MCF 10A (cell line): ENCODE measurements at regions of chr7 and their contacts with region 1.

Region 1: GRCh38 chr7:47669061-47669891 is 87.4 kb upstream of the TNS3 start:
- DNase-seq: peak; percentile 95
- H3K4me3 Mint-ChIP-seq: no peak overlapping the region
- H3K27ac Mint-ChIP-seq: peak overlapping the region; percentile 93
- H3K4me1 Mint-ChIP-seq: peaks cover 29% of the 10 kb centered on the region
- H3K27me3 Mint-ChIP-seq: no peaks in the 10 kb centered on the region
- CTCF ChIP-seq: no peak

Region 2: DNA sequence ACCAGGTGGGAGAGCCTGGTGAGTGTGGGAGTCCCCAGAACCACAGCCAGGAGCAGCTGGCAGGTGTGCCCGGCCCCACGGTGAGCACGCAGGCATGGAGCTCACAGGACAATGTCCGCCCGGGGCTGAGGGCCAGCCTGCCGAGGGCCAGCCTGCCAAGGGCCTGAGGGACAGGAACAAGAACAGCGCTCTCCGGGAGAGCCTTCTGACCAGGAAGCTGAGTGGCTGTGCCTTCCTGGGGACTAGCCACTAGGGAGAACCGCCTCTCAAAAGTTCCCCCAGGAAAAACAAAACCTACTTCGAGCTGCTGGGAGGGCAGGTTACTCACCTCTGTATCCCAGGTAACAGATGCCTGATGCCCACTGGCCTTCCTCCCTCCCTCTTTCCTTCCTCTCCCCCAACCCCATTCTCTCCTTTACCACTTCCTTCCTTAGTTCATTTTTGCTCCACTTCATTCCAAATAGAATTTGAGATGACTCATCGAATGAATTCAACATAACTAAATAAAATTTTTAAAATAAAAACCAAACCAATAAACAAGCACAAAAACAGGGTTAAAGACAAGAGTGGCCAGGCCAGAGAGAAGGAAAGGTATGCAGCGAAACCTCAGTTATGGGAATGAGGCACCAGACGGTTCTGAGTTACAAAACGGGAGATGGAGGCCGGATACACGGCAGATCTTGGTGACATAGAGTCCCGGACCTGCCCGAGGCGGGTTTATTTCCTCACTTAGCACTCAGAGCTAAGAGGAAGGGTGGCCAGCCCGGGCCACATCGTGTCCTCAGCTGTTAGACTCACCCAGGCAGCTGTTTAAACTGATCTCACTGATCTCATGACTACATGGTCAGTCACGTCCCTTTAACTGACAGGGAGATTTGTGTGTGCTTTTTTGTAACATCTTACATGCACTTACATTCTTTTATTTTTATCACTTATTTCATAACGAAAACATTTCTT is 215.9 kb before region 1 on chr7:
- CTCF ChIA-PET with region 1: no interaction called
- POLR2A ChIA-PET with region 1: no interaction called
- intact Hi-C with region 1: loop called (anchors 10 kb)
- DNase-seq: peak; percentile 79
- H3K4me3 Mint-ChIP-seq: peak overlapping the region; percentile 9
- H3K27ac Mint-ChIP-seq: peak overlapping the region; percentile 77
- H3K4me1 Mint-ChIP-seq: peaks cover 44% of the 10 kb centered on the region
- H3K27me3 Mint-ChIP-seq: no peaks in the 10 kb centered on the region
- CTCF ChIP-seq: no peak

Region 3: DNA sequence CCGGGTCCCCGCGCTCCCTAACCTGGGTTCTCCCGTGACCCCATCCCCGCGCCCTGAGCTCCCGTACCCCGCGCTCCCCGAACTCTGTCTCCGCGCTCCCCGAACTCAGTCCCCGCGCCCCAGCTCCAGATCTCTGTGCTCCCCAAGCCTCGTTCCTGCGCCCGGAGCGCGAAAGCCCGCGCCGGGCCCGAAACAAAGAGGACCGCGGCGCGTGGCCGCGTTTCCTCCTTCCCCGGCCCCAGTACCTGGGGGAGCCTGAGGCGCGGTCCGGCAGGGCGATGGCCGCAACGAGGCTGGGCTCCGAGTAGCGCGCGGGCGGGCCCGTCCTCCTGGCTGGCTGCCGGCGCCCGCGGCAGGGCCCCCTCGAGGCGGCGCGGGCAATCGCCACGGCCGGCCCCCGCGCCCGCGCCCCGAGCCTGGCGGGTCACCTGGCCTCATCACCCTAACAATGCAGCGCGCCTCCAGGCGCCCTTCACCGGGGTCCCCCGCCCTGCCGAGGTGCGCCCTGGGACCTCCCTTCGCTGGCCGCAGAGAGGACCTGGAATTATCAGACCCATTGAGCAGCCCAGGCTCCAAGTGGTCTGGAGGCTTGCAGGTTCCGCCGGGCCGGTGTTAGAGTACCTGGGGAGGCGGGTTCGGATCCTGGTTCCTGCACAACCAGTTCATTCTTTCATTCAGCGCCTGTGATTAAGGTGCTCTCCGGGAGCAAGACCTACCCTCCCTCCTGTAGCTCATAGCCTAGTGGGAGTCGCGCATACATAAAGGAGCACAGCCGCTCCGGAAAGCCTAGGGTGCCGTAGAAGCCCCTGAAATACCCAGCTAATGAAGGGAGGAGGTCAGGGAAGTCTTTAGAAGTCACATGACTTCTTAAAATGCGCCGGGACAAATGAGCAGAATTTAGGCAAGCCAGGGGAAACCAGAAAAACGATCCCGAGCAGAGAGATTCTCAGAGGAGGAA is 87.2 kb before region 1 on chr7 and contains the start of gene TNS3:
- CTCF ChIA-PET with region 1: interaction called, 3 read pairs
- POLR2A ChIA-PET with region 1: interaction called, 8 read pairs
- intact Hi-C with region 1: loop called (anchors 5 kb)
- DNase-seq: no peak
- H3K4me3 Mint-ChIP-seq: peak within 1 kb of the TSS; percentile 94
- H3K27ac Mint-ChIP-seq: peak within 1 kb of the TSS; percentile 92
- H3K4me1 Mint-ChIP-seq: peaks cover 35% of the 10 kb centered on the region
- H3K27me3 Mint-ChIP-seq: no peaks in the 10 kb centered on the region
- CTCF ChIP-seq: peak; percentile 15
- total RNA-seq, gene TNS3: 30.1 and 33.3 TPM in 2 replicates

Region 4: GRCh38 chr7:47757921-47758411 is 88.7 kb after region 1 on chr7:
- CTCF ChIA-PET with region 1: interaction called, 9 read pairs
- POLR2A ChIA-PET with region 1: interaction called, 3 read pairs
- intact Hi-C with region 1: loop called (anchors 10 kb)
- DNase-seq: peak; percentile 82
- H3K4me3 Mint-ChIP-seq: peak overlapping the region; percentile 2
- H3K27ac Mint-ChIP-seq: peak overlapping the region; percentile 100
- H3K4me1 Mint-ChIP-seq: peaks cover 39% of the 10 kb centered on the region
- H3K27me3 Mint-ChIP-seq: no peaks in the 10 kb centered on the region
- CTCF ChIP-seq: no peak

Region 5: DNA sequence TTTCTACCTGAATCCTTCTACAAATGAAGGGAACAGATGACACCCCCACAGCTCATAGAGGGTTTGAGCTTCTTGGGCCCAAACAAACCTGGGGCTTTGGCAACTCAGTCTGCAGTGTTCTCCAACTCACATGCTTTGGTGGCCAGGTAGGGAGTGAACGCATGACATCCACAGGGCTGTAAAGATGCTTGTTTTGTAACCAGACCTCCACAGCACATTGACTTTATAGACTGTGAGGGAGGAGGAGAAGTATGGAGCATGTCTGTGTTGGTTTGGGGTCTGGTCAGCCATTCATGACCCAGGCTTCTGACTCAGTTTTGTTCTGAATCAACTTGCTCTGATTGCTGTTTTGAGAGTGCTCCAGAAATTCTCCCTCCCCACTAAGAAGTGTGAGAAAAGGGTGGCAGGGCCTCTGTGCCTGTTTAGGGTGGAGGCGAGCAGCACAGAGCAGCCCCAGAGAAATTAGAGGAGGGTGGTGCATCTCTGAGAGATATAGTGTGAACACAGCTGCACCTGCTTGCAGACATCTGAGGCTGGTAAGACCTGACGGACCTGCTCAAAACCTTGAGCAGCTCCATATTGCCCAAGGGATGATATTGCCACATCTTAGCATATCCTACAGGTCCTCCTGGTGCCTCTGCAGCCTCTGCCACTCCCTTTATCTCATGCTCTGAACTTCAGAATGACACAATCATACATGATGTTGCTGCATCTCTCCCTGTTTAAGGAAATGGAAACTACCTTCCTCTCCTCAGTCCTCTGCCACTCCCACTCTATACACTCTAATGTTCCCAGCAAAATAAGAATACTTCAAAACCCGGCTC is 789.6 kb after region 1 on chr7:
- CTCF ChIA-PET with region 1: no interaction called
- POLR2A ChIA-PET with region 1: no interaction called
- intact Hi-C with region 1: no loop called
- DNase-seq: peak; percentile 4
- H3K4me3 Mint-ChIP-seq: no peak overlapping the region
- H3K27ac Mint-ChIP-seq: no peak overlapping the region
- H3K4me1 Mint-ChIP-seq: peaks cover 5% of the 10 kb centered on the region
- H3K27me3 Mint-ChIP-seq: peaks cover 9% of the 10 kb centered on the region
- CTCF ChIP-seq: no peak